CD4-positive, alpha-beta T cell (primary cell): ENCODE measurements at regions of chr6 and their contacts with region 1.

Region 1: GRCh38 chr6:90216072-90216977 is 80.3 kb downstream of the BACH2 start:
- DNase-seq: peak in 9 of 14 experiments; percentile 13 to 83 (median 60)
- ATAC-seq: peak; percentile 42
- H3K4me3 ChIP-seq: no peak overlapping the region
- H3K4me3 Mint-ChIP-seq: peak overlapping the region; percentile 78
- H3K27ac ChIP-seq: peak overlapping the region; percentile 52 to 76
- H3K27ac Mint-ChIP-seq: no peak overlapping the region
- H3K4me1 ChIP-seq: peaks cover 60% of the 10 kb centered on the region
- H3K4me1 Mint-ChIP-seq: peaks cover 33% of the 10 kb centered on the region
- H3K27me3 ChIP-seq: no peaks in the 10 kb centered on the region
- H3K27me3 Mint-ChIP-seq: no peaks in the 10 kb centered on the region
- CTCF ChIP-seq: no peak

Region 2: GRCh38 chr6:89952686-89953085 is 263.6 kb before region 1 on chr6:
- CTCF ChIA-PET with region 1: no interaction called
- POLR2A ChIA-PET with region 1: no interaction called
- intact Hi-C with region 1: loop called in 1 of 2 experiments (anchors 2 kb)
- DNase-seq: peak; percentile 22 to 90 (median 48)
- ATAC-seq: peak; percentile 94
- H3K4me3 ChIP-seq: no peak overlapping the region
- H3K4me3 Mint-ChIP-seq: peak overlapping the region; percentile 67
- H3K27ac ChIP-seq: peak overlapping the region; percentile 48 to 49
- H3K27ac Mint-ChIP-seq: peak overlapping the region; percentile 92
- H3K4me1 ChIP-seq: peaks cover 55% of the 10 kb centered on the region
- H3K4me1 Mint-ChIP-seq: peaks cover 74% of the 10 kb centered on the region
- H3K27me3 ChIP-seq: no peaks in the 10 kb centered on the region
- H3K27me3 Mint-ChIP-seq: no peaks in the 10 kb centered on the region
- CTCF ChIP-seq: no peak

Region 3: GRCh38 chr6:90179190-90180169 is 36.8 kb before region 1 on chr6:
- CTCF ChIA-PET with region 1: no interaction called
- POLR2A ChIA-PET with region 1: interaction called, 9 read pairs
- intact Hi-C with region 1: loop called in 1 of 2 experiments (anchors 5 kb)
- DNase-seq: peak in 5 of 14 experiments; percentile 16 to 67 (median 57)
- ATAC-seq: no peak
- H3K4me3 ChIP-seq: no peak overlapping the region
- H3K4me3 Mint-ChIP-seq: no peak overlapping the region
- H3K27ac ChIP-seq: no peak overlapping the region
- H3K27ac Mint-ChIP-seq: peak overlapping the region; percentile 84
- H3K4me1 ChIP-seq: peaks cover 35% of the 10 kb centered on the region
- H3K4me1 Mint-ChIP-seq: peaks cover 87% of the 10 kb centered on the region
- H3K27me3 ChIP-seq: no peaks in the 10 kb centered on the region
- H3K27me3 Mint-ChIP-seq: no peaks in the 10 kb centered on the region
- CTCF ChIP-seq: peak; percentile 75

Region 4: DNA sequence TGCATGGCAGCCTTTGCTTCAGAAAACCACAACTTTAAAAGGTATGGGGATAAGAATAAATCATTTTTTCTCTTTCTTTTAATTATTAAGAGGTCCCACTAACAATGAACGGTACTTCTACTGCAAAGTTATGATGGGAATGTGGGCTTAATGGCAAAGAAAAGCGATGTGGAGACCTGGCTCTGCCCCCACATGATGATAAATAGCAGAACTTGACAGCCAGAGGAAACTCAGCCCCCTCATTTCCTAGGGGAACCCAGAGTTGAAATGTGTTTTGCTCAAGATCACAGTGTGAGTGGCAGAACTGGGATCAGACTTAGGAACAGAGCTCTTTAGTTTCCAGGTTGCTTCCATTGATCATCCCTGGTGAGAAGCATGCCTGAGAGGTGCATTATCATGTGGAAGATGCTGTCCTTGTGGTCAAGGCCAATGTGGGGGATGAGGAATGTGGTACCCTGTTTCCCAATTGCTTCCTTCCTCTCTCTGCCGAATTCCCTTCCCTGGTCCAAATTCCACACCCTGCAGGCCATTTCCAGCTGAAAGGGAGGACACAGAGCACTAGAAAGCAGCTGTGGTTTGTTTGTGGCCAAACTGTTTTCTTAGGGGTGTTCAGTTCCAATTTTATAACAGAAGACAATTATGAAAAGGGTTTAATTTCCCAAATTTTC is 14.4 kb after region 1 on chr6:
- CTCF ChIA-PET with region 1: interaction called, 3 read pairs
- POLR2A ChIA-PET with region 1: interaction called, 13 read pairs
- intact Hi-C with region 1: loop called in 1 of 2 experiments (anchors 1 kb)
- DNase-seq: no peak
- ATAC-seq: no peak
- H3K4me3 ChIP-seq: no peak overlapping the region
- H3K4me3 Mint-ChIP-seq: peak overlapping the region; percentile 40
- H3K27ac ChIP-seq: peak overlapping the region in 1 of 2 donors; percentile 80
- H3K27ac Mint-ChIP-seq: peak overlapping the region; percentile 96
- H3K4me1 ChIP-seq: peaks cover 46% of the 10 kb centered on the region
- H3K4me1 Mint-ChIP-seq: peaks cover 97% of the 10 kb centered on the region
- H3K27me3 ChIP-seq: no peaks in the 10 kb centered on the region
- H3K27me3 Mint-ChIP-seq: no peaks in the 10 kb centered on the region
- CTCF ChIP-seq: no peak

Region 5: GRCh38 chr6:90263633-90264032 is 47.3 kb after region 1 on chr6:
- CTCF ChIA-PET with region 1: no interaction called
- POLR2A ChIA-PET with region 1: interaction called, 10 read pairs
- intact Hi-C with region 1: loop called in 1 of 2 experiments (anchors 1 kb)
- DNase-seq: peak in 1 of 14 experiments; percentile 46
- ATAC-seq: no peak
- H3K4me3 ChIP-seq: no peak overlapping the region
- H3K4me3 Mint-ChIP-seq: peak overlapping the region; percentile 40
- H3K27ac ChIP-seq: no peak overlapping the region
- H3K27ac Mint-ChIP-seq: peak overlapping the region; percentile 96
- H3K4me1 ChIP-seq: peaks cover 19% of the 10 kb centered on the region
- H3K4me1 Mint-ChIP-seq: peaks cover 97% of the 10 kb centered on the region
- H3K27me3 ChIP-seq: no peaks in the 10 kb centered on the region
- H3K27me3 Mint-ChIP-seq: no peaks in the 10 kb centered on the region
- CTCF ChIP-seq: no peak

Region 6: DNA sequence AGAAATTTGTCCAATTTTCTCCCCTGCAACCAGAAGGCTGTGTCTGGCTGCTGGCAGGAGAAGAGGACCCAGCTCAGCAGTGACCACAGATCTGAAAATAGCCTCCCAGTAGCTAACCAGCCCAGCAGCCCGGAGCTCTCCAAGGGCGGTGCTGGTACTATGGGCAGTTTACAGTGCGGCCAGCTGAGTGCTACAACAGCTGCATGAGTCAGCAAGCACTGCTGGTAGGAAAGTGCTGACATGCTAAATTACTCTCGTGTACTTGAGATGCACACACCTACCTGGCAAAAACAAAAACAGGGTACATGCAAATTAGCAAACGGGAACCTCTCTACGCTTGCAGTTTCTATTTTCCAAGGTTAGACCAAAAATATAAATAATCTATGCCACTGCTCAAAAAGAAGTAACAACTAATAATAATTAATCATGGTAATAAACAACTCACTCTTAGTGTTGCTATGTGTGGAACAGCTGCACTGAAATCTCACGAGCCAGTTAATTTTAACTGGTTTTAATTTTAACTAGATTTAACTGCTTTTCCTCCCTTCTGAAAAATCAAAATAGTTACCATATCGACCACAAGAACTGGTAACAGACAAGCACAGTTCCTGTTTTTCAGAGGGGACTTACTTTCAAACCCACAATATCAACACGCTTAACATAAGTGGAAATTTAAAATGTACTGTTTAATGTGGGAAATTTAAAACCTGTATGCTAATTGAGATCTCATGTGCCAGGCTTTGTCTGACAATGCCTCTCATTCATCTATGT is 69.5 kb after region 1 on chr6:
- CTCF ChIA-PET with region 1: interaction called, 3 read pairs
- POLR2A ChIA-PET with region 1: interaction called, 6 read pairs
- intact Hi-C with region 1: loop called (anchors 2 to 5 kb)
- DNase-seq: peak in 11 of 14 experiments; percentile 21 to 79 (median 45)
- ATAC-seq: peak; percentile 47
- H3K4me3 ChIP-seq: peak overlapping the region; percentile 54
- H3K4me3 Mint-ChIP-seq: peak overlapping the region; percentile 83
- H3K27ac ChIP-seq: peak overlapping the region; percentile 12 to 80
- H3K27ac Mint-ChIP-seq: peak overlapping the region; percentile 91
- H3K4me1 ChIP-seq: peaks cover 38% of the 10 kb centered on the region
- H3K4me1 Mint-ChIP-seq: peaks cover 93% of the 10 kb centered on the region
- H3K27me3 ChIP-seq: no peaks in the 10 kb centered on the region
- H3K27me3 Mint-ChIP-seq: no peaks in the 10 kb centered on the region
- CTCF ChIP-seq: no peak

Region 7: DNA sequence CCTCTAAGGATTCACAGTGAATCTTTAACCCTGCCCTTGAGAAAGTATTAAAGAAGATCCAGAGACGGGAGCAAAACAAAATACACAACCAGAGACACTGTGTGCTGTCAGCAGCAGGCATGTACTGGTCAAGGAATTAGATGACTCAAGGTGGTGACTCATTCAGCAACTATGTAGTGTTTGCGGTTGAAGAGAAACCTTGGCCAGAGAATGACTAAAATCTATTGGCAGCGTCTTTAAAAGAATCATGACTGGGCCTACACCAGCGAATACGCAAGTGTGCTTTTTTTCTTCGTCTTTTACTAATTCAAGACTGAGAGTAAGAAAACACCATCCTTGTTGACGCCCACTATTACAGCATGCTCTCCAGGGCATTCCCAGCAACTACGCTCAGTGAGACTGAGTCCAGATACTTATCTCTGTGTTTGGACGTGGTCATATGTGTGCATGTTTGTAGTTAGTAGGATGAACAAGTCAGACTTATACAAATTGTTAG is 152.7 kb after region 1 on chr6:
- CTCF ChIA-PET with region 1: no interaction called
- POLR2A ChIA-PET with region 1: no interaction called
- intact Hi-C with region 1: no loop called
- DNase-seq: peak in 4 of 14 experiments; percentile 21 to 61 (median 38)
- ATAC-seq: peak; percentile 58
- H3K4me3 ChIP-seq: no peak overlapping the region
- H3K4me3 Mint-ChIP-seq: no peak overlapping the region
- H3K27ac ChIP-seq: no peak overlapping the region
- H3K27ac Mint-ChIP-seq: no peak overlapping the region
- H3K4me1 ChIP-seq: no peaks in the 10 kb centered on the region
- H3K4me1 Mint-ChIP-seq: peaks cover 5% of the 10 kb centered on the region
- H3K27me3 ChIP-seq: no peaks in the 10 kb centered on the region
- H3K27me3 Mint-ChIP-seq: no peaks in the 10 kb centered on the region
- CTCF ChIP-seq: no peak

Region 8: DNA sequence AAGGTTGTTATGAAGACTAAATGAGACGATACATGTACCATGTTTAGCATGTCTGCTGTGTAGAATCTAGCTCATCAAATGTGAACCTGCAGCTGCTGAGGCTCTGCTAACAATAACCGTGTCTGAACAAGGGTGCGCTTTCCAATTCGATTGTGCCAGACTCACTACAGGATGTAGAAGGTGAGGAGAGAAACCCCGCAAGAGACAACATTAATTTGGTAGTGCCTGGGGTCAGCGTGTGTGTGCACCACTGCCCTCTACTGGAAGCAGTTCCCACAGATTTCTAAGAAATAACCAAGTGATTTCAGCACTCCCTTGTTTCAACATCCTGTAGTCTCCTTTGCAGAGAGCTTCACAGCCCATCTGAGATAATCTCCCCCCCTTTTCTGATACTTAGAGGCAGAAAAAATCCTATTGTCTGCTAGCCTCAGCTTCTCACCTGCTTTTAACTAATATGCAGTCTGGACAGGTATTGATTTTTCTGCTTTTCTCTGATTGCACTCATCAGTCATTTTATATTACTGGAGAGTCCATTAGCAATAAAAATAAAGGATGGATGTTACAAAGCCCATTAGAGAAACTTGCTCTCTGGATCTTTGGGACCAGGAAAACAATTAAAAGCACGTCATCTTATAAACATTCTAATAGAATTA is 177.0 kb after region 1 on chr6:
- CTCF ChIA-PET with region 1: interaction called, 4 read pairs
- POLR2A ChIA-PET with region 1: no interaction called
- intact Hi-C with region 1: loop called (anchors 2 kb)
- DNase-seq: peak; percentile 54 to 86 (median 61)
- ATAC-seq: peak; percentile 73
- H3K4me3 ChIP-seq: no peak overlapping the region
- H3K4me3 Mint-ChIP-seq: no peak overlapping the region
- H3K27ac ChIP-seq: no peak overlapping the region
- H3K27ac Mint-ChIP-seq: peak overlapping the region; percentile 6
- H3K4me1 ChIP-seq: peaks cover 22% of the 10 kb centered on the region
- H3K4me1 Mint-ChIP-seq: peaks cover 34% of the 10 kb centered on the region
- H3K27me3 ChIP-seq: no peaks in the 10 kb centered on the region
- H3K27me3 Mint-ChIP-seq: no peaks in the 10 kb centered on the region
- CTCF ChIP-seq: peak; percentile 81